Activated CD4-positive, alpha-beta T cell treated with anti-CD3 and anti-CD28 coated beads, Interleukin-2, amount 10 ng/mL, durations not matched to agents 24 days and 14 days (primary cell): ENCODE measurements at regions of chr4 and their contacts with region 1.

Region 1: DNA sequence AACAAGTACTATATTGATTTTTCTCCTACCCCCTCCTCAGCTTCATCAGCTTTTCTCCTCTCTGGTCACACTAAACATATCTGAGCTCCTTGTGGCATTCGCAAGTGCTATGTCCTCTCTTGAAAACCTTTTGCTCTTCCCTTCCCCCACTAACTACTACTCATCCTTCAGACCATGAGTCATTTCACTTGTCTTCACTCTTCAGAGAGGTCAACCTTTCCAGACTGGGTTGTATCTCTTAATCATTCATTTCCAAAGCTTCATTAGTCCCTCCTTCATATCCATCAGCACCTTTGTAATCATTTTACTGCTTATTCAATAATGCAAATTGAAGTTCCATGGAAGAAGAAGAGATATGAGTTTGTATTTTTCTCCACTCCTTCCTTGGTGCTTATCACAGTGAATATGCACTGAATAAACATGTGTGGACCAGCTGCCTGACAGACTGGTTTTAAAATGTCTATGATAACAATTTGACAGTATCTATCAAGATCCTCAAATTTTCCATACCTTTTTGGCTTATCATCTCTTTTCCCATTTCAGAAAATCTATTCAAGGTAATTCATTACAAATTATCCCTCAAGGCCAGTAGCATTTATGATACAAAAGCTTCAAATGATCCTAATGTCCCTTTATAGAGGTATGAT is 28.4 kb downstream of the DDX60L start:
- DNase-seq: no peak
- H3K4me3 Mint-ChIP-seq: no peak overlapping the region
- H3K27ac Mint-ChIP-seq: peak overlapping the region; percentile 51
- H3K4me1 Mint-ChIP-seq: peaks cover 25% of the 10 kb centered on the region
- H3K27me3 Mint-ChIP-seq: no peaks in the 10 kb centered on the region

Region 2: DNA sequence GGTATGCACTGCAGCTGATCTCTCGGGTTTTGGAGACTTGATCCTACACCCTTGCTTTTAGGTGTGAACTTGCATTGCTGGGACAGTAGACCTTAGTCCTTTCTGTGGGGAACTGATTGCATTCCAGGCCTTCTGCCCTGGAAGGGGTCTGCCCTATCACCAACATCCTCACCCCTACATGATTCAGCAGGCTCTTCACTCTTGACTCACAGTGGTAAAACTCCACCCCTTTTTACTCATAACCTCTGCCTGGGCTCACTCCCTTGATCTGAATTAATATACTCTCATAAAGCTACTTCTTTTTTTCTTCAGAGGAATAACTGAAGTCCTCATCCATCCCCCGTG is 35.1 kb after region 1 on chr4:
- intact Hi-C with region 1: loop called (anchors 5 kb)
- DNase-seq: no peak
- H3K4me3 Mint-ChIP-seq: no peak overlapping the region
- H3K27ac Mint-ChIP-seq: no peak overlapping the region
- H3K4me1 Mint-ChIP-seq: peaks cover 31% of the 10 kb centered on the region
- H3K27me3 Mint-ChIP-seq: no peaks in the 10 kb centered on the region

Region 3: DNA sequence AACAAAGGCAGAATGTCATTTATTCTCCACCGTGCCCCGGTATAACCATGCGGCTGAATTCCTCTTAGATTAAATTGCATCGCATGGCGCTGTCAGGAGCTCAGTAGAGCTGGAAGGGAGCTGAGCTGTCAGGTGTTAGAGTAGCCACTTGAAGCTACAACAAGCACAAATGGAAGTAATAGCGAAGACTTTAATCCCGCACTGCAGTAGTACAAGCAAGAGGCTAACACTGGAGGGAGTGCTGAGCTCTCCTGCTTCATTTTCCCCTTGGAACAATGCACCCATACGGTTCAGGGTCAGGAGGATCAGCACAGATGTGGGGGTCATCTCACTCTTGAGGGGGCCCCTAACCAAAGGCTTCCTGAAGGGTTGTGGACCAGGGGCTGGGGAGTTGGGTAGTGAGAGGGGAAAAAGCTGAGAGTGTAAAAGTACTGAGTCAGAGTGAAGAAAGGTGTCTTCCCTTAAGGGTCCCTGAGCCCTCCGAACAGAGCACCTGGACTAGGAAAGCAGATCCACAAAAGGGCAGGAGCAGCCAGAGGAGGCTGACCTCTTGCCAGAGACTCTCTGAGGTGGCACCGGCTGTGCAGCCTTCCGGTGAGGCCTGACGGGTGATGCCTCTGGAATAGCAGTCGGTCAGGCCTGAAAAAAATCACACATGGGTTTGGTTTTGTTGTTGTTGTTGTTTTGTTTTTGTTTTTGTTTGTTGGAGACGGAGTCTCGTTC is 594.2 kb after region 1 on chr4:
- intact Hi-C with region 1: no loop called
- DNase-seq: no peak
- H3K4me3 Mint-ChIP-seq: no peak overlapping the region
- H3K27ac Mint-ChIP-seq: no peak overlapping the region
- H3K4me1 Mint-ChIP-seq: no peaks in the 10 kb centered on the region
- H3K27me3 Mint-ChIP-seq: no peaks in the 10 kb centered on the region